Activated CD8-positive, alpha-beta T cell treated with anti-CD3 and anti-CD28 coated beads for 36 hours (primary cell): ENCODE measurements at regions of chr3 and their contacts with region 1.

Region 1: DNA sequence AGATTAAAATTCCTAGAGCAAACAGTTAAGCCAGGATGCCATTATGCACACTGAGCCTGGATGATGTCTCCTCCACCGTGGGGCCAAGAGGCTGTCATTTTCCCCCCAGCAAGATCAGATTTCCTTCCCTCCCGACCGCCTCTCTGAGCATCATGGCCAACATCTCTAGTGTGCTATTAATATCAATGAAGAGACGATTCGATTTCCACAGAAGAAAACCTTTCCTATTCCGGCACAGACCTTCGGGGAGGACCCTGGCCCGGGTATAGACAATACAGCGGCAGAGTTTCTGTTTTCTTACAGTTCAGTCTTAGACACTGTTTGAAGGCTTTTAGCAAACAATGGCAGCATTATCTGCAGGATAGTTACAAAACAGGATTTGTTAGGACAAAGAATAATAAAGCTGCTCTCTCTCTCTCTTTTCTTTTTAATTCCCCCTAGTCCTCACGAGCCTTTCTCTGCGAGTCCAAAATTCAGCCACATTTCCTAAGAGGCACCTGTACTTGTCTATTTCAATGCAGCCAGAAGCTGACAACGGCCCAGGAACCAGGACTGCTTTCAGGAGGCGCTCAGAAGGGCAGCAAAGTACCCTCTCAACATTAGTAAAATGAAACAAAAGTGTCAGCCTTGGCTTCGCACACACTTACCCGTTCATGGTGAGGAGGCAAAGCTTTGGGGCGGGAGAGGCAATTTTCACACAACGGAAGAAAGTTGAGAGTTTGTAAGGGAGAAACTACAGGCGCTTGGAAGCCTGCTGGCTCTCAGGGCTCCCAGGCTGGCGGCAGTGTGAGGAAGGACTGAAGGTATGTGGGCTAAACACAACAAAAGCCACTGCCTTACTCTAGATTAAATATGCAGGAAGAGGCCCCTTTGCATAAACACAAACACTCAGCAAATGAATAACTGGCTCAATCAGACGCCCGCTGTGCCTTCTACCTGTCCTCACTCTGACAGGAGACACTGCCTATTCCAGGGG is 278.0 kb downstream of the FOXP1 start:
- DNase-seq: peak; percentile 46
- ATAC-seq: peak; percentile 3
- H3K4me3 Mint-ChIP-seq: peak overlapping the region; percentile 89
- H3K27ac Mint-ChIP-seq: peak overlapping the region; percentile 97
- H3K4me1 Mint-ChIP-seq: peaks cover 55% of the 10 kb centered on the region
- H3K27me3 Mint-ChIP-seq: no peaks in the 10 kb centered on the region
- CTCF ChIP-seq: no peak

Region 2: GRCh38 chr3:71006810-71007785 is 298.4 kb before region 1 on chr3:
- CTCF ChIA-PET with region 1: no interaction called
- POLR2A ChIA-PET with region 1: no interaction called
- intact Hi-C with region 1: loop called (anchors 5 kb)
- DNase-seq: no peak
- ATAC-seq: no peak
- H3K4me3 Mint-ChIP-seq: no peak overlapping the region
- H3K27ac Mint-ChIP-seq: peak overlapping the region; percentile 93
- H3K4me1 Mint-ChIP-seq: peaks cover 73% of the 10 kb centered on the region
- H3K27me3 Mint-ChIP-seq: no peaks in the 10 kb centered on the region
- CTCF ChIP-seq: peak; percentile 63

Region 3: GRCh38 chr3:71087143-71088018 is 218.1 kb before region 1 on chr3:
- CTCF ChIA-PET with region 1: no interaction called
- POLR2A ChIA-PET with region 1: interaction called, 4 read pairs
- intact Hi-C with region 1: loop called (anchors 5 kb)
- DNase-seq: peak; percentile 71
- ATAC-seq: peak; percentile 72
- H3K4me3 Mint-ChIP-seq: peak overlapping the region; percentile 57
- H3K27ac Mint-ChIP-seq: peak overlapping the region; percentile 93
- H3K4me1 Mint-ChIP-seq: peaks cover 90% of the 10 kb centered on the region
- H3K27me3 Mint-ChIP-seq: no peaks in the 10 kb centered on the region
- CTCF ChIP-seq: no peak

Region 4: DNA sequence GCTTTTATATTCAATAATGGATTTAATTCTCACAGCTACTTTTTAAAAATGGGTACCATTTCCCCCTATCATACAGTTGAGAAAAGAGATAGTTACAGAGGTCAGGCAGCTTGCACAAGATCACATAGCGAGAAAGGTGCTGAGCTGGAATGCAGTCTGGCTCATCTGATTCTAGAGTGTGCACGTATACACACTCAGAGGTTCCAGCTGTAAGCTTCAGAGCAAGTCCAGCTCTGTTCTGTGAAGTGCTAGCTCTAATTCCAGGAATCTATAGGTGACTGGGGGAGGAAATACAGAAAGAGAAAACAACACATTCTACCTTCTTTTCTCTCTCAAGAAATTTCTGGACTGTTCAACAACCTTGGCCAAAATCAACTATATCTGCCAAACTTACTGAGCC is 40.7 kb before region 1 on chr3:
- CTCF ChIA-PET with region 1: no interaction called
- POLR2A ChIA-PET with region 1: interaction called, 11 read pairs
- intact Hi-C with region 1: no loop called
- DNase-seq: peak; percentile 44
- ATAC-seq: peak; percentile 74
- H3K4me3 Mint-ChIP-seq: peak overlapping the region; percentile 22
- H3K27ac Mint-ChIP-seq: peak overlapping the region; percentile 89
- H3K4me1 Mint-ChIP-seq: peaks cover 71% of the 10 kb centered on the region
- H3K27me3 Mint-ChIP-seq: no peaks in the 10 kb centered on the region
- CTCF ChIP-seq: no peak

Region 5: DNA sequence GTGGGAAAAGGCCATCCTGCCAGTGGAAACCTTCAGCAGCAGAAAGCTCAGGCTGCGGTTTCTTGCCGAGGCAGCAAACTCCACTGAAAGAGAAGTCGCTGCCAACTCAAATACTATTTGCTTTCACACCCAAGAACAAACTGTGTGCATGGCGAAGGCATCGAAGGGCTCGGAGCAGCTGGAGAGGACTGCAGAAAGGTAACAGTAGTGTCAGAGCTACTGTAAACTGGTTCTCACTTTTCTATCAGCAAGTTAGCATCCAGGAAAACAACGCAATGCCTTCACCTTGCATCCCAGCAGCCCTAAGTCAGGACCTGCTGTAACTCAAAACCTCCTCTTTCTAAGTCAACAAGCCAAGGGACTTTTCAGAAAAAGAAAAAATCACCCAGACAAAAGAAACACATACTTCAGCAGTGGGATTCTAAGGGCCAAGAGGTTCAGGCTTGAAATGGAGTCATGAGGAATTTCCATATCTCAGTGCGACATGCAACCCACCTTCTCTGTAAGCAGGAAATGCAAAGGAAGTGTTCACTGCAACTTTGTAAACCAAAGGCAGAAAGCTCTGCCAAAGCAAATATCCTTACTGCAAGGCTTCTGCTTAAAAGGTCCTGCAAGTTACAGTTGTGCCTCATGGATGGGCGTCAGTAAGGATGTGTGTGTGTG is 84.5 kb after region 1 on chr3:
- CTCF ChIA-PET with region 1: interaction called, 7 read pairs
- POLR2A ChIA-PET with region 1: interaction called, 47 read pairs
- intact Hi-C with region 1: loop called (anchors 2 kb)
- DNase-seq: peak; percentile 48
- ATAC-seq: peak; percentile 25
- H3K4me3 Mint-ChIP-seq: peak overlapping the region; percentile 72
- H3K27ac Mint-ChIP-seq: peak overlapping the region; percentile 94
- H3K4me1 Mint-ChIP-seq: peaks cover 72% of the 10 kb centered on the region
- H3K27me3 Mint-ChIP-seq: no peaks in the 10 kb centered on the region
- CTCF ChIP-seq: no peak

Region 6: DNA sequence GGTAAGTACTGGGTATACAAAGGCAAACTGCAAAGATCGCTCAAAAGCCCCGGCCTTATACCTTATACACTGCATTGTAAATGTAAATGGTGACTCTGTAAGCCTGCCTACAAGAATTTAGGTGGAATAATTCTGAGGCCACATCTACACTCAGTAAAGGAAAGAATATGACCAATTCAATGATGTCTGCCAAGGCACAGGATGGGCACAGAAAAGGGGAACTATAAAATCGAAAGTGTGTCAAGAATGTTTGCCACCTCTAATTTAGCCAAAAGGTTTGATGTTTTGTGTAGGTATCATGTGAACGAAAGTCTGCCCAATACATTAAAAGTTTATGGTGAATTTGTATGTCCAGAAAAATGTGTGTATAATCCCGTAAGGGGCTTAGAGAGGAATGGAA is 181.9 kb after region 1 on chr3:
- CTCF ChIA-PET with region 1: interaction called, 4 read pairs
- POLR2A ChIA-PET with region 1: interaction called, 4 read pairs
- intact Hi-C with region 1: loop called (anchors 10 kb)
- DNase-seq: no peak
- ATAC-seq: peak; percentile 29
- H3K4me3 Mint-ChIP-seq: peak overlapping the region; percentile 72
- H3K27ac Mint-ChIP-seq: peak overlapping the region; percentile 98
- H3K4me1 Mint-ChIP-seq: peaks cover 83% of the 10 kb centered on the region
- H3K27me3 Mint-ChIP-seq: no peaks in the 10 kb centered on the region
- CTCF ChIP-seq: no peak